ENCODE measurements at regions of chr20 and their contacts with region 1.

Region 1: GRCh38 chr20:50892394-50892793 is 38.8 kb downstream of the ADNP start:
- DNase-seq: no peak
- H3K4me3 ChIP-seq: no peak overlapping the region
- H3K27ac ChIP-seq: no peak overlapping the region
- H3K4me1 ChIP-seq: no peaks in the 10 kb centered on the region
- H3K27me3 ChIP-seq: no peaks in the 10 kb centered on the region
- CTCF ChIP-seq: no peak

Region 2: DNA sequence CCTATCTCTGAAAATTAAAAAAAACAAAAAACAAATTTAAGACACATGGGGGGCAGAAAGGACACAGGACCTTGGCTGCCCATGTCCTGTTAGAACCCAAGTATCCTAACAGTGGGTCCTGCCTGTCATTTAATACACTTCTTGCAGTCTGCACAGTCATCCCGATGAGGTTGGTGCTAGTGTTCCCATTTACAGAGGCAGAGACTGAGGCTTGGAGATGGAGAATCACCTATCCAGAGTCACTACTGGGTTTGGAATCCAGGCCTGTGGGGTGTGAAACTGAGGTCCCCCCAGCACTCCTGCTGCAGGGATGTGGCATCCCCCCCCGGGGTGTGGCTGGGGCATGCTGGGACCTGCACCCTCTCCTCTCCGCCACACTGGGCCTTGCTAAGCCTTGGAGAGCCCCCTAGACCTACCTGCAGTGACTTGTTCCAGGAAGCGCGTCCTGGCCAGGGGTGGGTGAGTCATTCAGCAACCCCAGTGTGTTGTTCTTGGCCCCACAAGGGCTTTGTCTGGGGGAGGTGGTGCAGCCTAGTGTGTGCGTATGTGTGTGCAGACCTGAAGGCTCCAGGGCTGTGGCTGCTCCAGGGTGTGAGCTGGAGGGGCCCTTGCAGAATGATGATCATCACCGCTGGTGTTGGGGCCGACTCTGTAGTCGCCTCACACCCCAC is 47.8 kb before region 1 on chr20:
- intact Hi-C with region 1: loop called (anchors 2 kb)
- DNase-seq: no peak
- H3K4me3 ChIP-seq: no peak overlapping the region
- H3K27ac ChIP-seq: no peak overlapping the region
- H3K4me1 ChIP-seq: no peaks in the 10 kb centered on the region
- H3K27me3 ChIP-seq: no peaks in the 10 kb centered on the region
- CTCF ChIP-seq: no peak

Region 3: DNA sequence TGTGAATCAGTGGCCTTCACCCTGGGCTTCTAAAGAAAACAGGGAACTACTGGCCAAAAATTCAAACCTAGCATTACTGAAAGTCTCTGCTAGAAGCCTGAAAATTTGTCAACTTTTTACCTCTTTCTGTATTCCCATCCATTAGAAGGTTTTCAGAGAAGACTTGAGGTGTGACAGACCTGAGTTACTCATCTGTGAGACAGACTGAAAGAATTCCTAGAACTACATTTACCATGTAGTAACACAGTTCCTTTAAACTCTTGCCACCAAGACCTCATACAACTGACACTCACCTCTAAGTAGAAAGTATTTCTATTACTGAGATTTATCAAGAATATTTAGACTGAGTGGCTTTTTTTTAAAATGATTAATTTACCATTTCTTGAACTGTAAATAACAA is 61.4 kb after region 1 on chr20:
- intact Hi-C with region 1: no loop called
- DNase-seq: no peak
- H3K4me3 ChIP-seq: no peak overlapping the region
- H3K27ac ChIP-seq: no peak overlapping the region
- H3K4me1 ChIP-seq: peaks cover 8% of the 10 kb centered on the region
- H3K27me3 ChIP-seq: no peaks in the 10 kb centered on the region
- CTCF ChIP-seq: no peak

Region 4: DNA sequence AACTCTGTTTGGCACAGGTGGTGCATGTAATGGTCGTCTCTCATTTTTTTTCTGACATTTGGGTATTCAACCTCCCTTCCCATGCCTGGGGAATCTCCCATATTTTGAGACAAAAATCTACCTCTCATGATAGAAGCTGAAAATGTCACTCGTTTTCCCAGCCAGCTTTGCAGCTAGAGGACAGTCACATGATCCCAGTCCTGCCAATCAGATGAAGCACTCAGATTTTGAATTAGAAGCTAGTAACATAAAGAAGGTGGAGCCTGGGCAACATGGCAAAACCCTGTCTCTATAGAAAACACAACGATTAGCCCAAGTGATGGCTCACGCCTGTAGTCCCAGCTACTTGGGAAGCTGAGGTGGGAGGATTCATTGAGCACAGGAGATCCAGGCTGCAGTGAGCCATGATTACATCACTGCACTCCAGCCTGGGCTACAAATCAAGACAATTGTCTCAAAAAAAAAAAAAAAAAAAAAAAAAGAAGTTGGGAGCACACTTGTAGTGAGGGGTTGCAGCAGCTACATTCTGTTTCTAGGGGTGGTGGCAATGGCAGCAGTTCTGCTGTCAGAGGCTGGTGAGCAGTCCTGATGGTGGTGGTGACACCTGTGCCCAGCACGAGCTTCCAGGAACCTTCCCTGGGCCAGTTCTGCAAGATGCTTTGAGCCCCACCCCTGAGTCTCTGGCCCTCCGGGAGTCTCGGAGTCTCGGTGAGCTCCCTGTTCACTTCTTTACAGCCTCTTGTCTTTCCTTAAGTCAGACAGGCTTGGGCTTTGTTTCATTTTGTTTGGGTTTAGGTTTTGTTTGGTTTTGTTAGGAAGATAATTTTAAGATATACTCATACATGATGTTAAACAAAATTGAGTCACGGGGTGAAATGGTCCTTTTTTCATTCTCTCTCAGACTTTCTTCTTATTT is 224.6 kb after region 1 on chr20:
- intact Hi-C with region 1: no loop called
- DNase-seq: no peak
- H3K4me3 ChIP-seq: no peak overlapping the region
- H3K27ac ChIP-seq: no peak overlapping the region
- H3K4me1 ChIP-seq: no peaks in the 10 kb centered on the region
- H3K27me3 ChIP-seq: no peaks in the 10 kb centered on the region
- CTCF ChIP-seq: no peak

Region 5: DNA sequence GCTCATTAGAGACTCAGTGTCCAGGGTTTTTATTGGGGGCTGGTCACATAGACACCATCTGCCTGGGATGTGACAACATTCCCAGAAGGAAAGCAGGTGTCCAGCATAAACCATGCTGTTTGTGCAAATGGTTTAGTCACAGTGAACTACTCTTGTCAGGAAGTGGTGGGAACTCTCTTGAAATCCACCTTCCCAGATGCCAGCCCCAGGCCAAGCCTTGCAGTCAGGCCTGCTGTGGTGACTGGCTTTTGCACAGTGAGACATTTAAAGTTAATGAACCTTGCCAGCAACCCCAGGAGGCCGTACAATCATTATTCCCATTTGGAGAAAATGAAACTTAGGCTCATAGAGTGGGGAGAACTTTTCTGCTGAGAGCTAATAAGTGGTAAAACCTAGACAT is 373.0 kb after region 1 on chr20:
- intact Hi-C with region 1: no loop called
- DNase-seq: no peak
- H3K4me3 ChIP-seq: no peak overlapping the region
- H3K27ac ChIP-seq: no peak overlapping the region
- H3K4me1 ChIP-seq: no peaks in the 10 kb centered on the region
- H3K27me3 ChIP-seq: no peaks in the 10 kb centered on the region
- CTCF ChIP-seq: no peak